HCT116 (cell line): ENCODE measurements at regions of chr13 and their contacts with region 1.

Region 1: DNA sequence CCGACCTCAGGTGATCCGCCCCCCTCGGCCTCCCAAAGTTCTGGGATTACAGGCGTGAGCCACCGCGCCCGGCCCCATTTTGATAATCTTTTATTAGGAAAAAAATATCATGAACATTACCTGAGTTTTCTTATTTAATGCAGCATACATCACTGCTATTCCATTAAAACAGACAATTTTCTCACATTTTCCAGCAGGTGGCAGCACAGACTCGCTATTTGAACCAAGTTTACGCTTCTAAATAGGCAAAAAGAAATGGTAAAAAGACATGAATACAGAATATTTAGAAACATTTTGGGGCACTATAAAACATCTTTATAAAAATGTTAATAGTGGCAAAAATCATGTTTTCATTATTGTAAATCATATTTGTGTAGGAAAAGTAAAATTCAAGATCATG is 903.1 kb downstream of the SLITRK6 start:
- DNase-seq: peak; percentile 45
- ATAC-seq: peak; percentile 58
- H3K4me3 ChIP-seq: no peak overlapping the region
- H3K27ac ChIP-seq: no peak overlapping the region
- H3K4me1 ChIP-seq: no peaks in the 10 kb centered on the region
- H3K27me3 ChIP-seq: no peaks in the 10 kb centered on the region
- CTCF ChIP-seq: peak; percentile 27 to 66 (median 35); a peak in 4 of 6 replicates
- POLR2A ChIP-seq: no peak
- RAD21 ChIP-seq: peak; percentile 64

Region 2: GRCh38 chr13:84962141-84962750 is 66.1 kb after region 1 on chr13:
- CTCF ChIA-PET with region 1: no interaction called
- POLR2A ChIA-PET with region 1: no interaction called
- RAD21 ChIA-PET with region 1: no interaction called
- intact Hi-C with region 1: no loop called
- DNase-seq: no peak
- ATAC-seq: no peak
- H3K4me3 ChIP-seq: no peak overlapping the region
- H3K27ac ChIP-seq: no peak overlapping the region
- H3K4me1 ChIP-seq: no peaks in the 10 kb centered on the region
- H3K27me3 ChIP-seq: no peaks in the 10 kb centered on the region
- CTCF ChIP-seq: no peak
- POLR2A ChIP-seq: no peak
- RAD21 ChIP-seq: no peak

Region 3: DNA sequence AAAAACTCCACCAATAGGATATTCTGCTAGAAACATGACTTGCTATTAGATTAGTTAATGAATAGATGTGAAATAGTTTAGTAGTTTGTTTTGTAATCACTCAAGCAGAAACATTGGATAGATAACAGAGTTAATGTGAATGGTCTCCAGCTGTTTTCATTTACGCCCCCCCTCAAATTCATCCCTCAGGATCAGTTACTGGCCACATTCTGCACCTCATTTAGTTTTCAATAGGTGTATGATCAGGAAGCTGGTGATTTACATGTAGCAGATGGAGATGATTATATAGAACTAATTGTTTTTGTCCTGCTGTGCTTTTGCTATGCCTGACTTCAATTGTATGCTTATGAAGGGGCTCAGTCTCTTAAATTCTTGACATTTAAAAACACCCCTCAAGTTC is 144.1 kb after region 1 on chr13:
- CTCF ChIA-PET with region 1: no interaction called
- POLR2A ChIA-PET with region 1: no interaction called
- RAD21 ChIA-PET with region 1: no interaction called
- intact Hi-C with region 1: no loop called
- DNase-seq: no peak
- ATAC-seq: no peak
- H3K4me3 ChIP-seq: no peak overlapping the region
- H3K27ac ChIP-seq: no peak overlapping the region
- H3K4me1 ChIP-seq: no peaks in the 10 kb centered on the region
- H3K27me3 ChIP-seq: no peaks in the 10 kb centered on the region
- CTCF ChIP-seq: no peak
- POLR2A ChIP-seq: no peak
- RAD21 ChIP-seq: no peak

Region 4: DNA sequence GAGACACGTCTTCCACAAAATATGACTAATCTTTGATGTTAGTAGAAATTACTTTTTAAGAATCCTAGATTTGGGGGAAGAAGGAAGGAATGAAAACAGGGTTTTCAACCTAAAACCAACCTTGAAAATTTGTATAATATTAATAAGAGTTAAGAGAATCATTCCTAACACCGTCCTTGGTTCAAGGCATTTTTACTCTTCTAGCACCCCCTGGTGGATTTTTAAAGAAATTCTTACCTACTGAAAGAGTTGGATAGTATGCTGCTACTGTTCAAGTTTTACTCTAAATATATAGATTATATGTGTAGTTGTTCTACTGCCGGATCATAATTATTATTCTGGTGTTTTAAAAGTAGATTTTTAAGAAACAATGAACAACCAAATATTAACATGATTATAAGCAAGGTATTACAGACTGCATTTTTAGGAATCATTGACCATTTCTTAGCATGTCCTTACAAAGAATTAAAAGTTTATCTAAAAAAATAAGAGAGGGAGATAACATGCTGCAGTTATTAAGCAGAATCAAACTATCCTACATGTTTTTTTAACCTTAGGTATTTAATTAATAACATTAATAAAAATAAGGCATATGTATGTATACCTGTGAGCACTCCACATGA is 910.5 kb after region 1 on chr13:
- CTCF ChIA-PET with region 1: interaction called, 6 read pairs
- POLR2A ChIA-PET with region 1: no interaction called
- RAD21 ChIA-PET with region 1: no interaction called
- intact Hi-C with region 1: loop called (anchors 1 kb)
- DNase-seq: peak; percentile 28
- ATAC-seq: 0 out of 2 replicates have a peak, but pooled peaks have one; percentile 44
- H3K4me3 ChIP-seq: no peak overlapping the region
- H3K27ac ChIP-seq: no peak overlapping the region
- H3K4me1 ChIP-seq: no peaks in the 10 kb centered on the region
- H3K27me3 ChIP-seq: no peaks in the 10 kb centered on the region
- CTCF ChIP-seq: peak in 2 of 3 experiments; percentile 21 to 50; a peak in 3 of 6 replicates
- POLR2A ChIP-seq: no peak
- RAD21 ChIP-seq: peak; percentile 62

Region 5: GRCh38 chr13:85828149-85828548 is 932.0 kb after region 1 on chr13:
- CTCF ChIA-PET with region 1: no interaction called
- POLR2A ChIA-PET with region 1: no interaction called
- RAD21 ChIA-PET with region 1: no interaction called
- intact Hi-C with region 1: loop called (anchors 5 kb)
- DNase-seq: peak; percentile 13
- ATAC-seq: no peak
- H3K4me3 ChIP-seq: no peak overlapping the region
- H3K27ac ChIP-seq: no peak overlapping the region
- H3K4me1 ChIP-seq: no peaks in the 10 kb centered on the region
- H3K27me3 ChIP-seq: no peaks in the 10 kb centered on the region
- CTCF ChIP-seq: peak in 2 of 3 experiments; percentile 47 to 49; a peak in 4 of 6 replicates
- POLR2A ChIP-seq: no peak
- RAD21 ChIP-seq: peak; percentile 21; the same call in 1 of the 2 replicates